K562 (cell line): ENCODE measurements at regions of chr11 and their contacts with region 1.

Region 1: GRCh38 chr11:62841361-62842184 is 2.2 kb upstream of the WDR74 start:
- DNase-seq: peak; percentile 81 to 96 (median 88)
- ATAC-seq: peak; percentile 89
- H3K4me3 ChIP-seq: peak overlapping the region; percentile 33
- H3K27ac ChIP-seq: peak overlapping the region; percentile 89
- H3K4me1 ChIP-seq: peaks cover 8 to 19% of the 10 kb centered on the region in 2 experiments; a peak in 3 of 5 replicates
- H3K27me3 ChIP-seq: no peaks in the 10 kb centered on the region
- CTCF ChIP-seq: 0 out of 6 replicates have a peak, but pooled peaks of 2 of the 3 experiments have one; percentile 3 to 10
- EP300 ChIP-seq: peak; percentile 82
- POLR2A ChIP-seq: peak; percentile 100
- RAD21 ChIP-seq: peak; percentile 33 to 74; a peak in 3 of 4 replicates

Region 2: DNA sequence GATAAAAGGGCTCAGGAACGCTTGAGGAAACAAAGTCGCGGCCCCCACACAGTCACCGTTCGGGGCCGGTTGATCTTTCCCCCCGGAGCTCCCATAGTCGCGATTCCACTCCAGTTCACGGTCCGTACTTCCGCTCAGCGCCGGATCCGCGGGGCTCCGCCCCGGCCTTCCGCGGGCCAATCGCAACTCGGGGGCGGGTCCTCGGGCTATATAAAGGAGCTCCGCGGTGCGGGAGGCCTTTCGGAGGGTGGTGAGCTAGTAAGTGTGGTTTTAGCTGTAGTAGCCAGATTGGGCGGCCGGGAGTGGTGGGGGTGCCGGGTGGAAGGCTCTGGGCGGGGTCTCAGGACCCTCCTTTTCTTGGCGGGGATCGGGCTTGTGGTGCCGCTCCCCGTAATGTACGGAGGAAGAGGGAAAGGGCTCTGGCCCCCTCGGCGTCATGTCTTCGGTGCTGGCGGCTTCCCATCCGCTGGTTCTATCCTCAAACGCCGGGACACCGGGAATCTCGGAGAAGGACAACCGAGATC is 176.4 kb before region 1 on chr11 and contains the starts of genes C11orf98 and CSKMT:
- CTCF ChIA-PET with region 1: no interaction called
- POLR2A ChIA-PET with region 1: interaction called, 18 read pairs
- in situ Hi-C with region 1: no loop called
- intact Hi-C with region 1: loop called (anchors 5 kb)
- DNase-seq: peak; percentile 91 to 97 (median 94)
- ATAC-seq: peak; percentile 87
- H3K4me3 ChIP-seq: peak within 1 kb of the TSS; percentile 73
- H3K27ac ChIP-seq: peak within 1 kb of the TSS; percentile 80
- H3K4me1 ChIP-seq: peaks cover 19 to 41% of the 10 kb centered on the region in 2 experiments; a peak in 4 of 5 replicates
- H3K27me3 ChIP-seq: no peaks in the 10 kb centered on the region
- CTCF ChIP-seq: no peak
- EP300 ChIP-seq: no peak
- POLR2A ChIP-seq: peak; percentile 100
- RAD21 ChIP-seq: peak in 1 of 2 experiments; percentile 8; a peak in 1 of 4 replicates
- polyA plus RNA-seq, gene C11orf98: 164 to 246 TPM
- polyA plus RNA-seq, gene CSKMT: 26.4 to 31.8 TPM

Region 3: GRCh38 chr11:62753736-62754603 is 87.6 kb before region 1 on chr11 and contains the start of gene ZBTB3:
- CTCF ChIA-PET with region 1: no interaction called
- POLR2A ChIA-PET with region 1: interaction called, 21 read pairs
- in situ Hi-C with region 1: no loop called
- intact Hi-C with region 1: no loop called
- DNase-seq: peak; percentile 95 to 99 (median 96)
- ATAC-seq: peak; percentile 98
- H3K4me3 ChIP-seq: peak within 1 kb of the TSS; percentile 63
- H3K27ac ChIP-seq: peak within 1 kb of the TSS; percentile 86
- H3K4me1 ChIP-seq: peaks cover 14 to 28% of the 10 kb centered on the region in 2 experiments; a peak in 4 of 5 replicates
- H3K27me3 ChIP-seq: no peaks in the 10 kb centered on the region
- CTCF ChIP-seq: peak in 1 of 3 experiments; percentile 1; a peak in 1 of 6 replicates
- EP300 ChIP-seq: no peak
- POLR2A ChIP-seq: peak; percentile 98
- RAD21 ChIP-seq: no peak
- polyA plus RNA-seq, gene ZBTB3: 1.9 to 3.0 TPM

Region 4: DNA sequence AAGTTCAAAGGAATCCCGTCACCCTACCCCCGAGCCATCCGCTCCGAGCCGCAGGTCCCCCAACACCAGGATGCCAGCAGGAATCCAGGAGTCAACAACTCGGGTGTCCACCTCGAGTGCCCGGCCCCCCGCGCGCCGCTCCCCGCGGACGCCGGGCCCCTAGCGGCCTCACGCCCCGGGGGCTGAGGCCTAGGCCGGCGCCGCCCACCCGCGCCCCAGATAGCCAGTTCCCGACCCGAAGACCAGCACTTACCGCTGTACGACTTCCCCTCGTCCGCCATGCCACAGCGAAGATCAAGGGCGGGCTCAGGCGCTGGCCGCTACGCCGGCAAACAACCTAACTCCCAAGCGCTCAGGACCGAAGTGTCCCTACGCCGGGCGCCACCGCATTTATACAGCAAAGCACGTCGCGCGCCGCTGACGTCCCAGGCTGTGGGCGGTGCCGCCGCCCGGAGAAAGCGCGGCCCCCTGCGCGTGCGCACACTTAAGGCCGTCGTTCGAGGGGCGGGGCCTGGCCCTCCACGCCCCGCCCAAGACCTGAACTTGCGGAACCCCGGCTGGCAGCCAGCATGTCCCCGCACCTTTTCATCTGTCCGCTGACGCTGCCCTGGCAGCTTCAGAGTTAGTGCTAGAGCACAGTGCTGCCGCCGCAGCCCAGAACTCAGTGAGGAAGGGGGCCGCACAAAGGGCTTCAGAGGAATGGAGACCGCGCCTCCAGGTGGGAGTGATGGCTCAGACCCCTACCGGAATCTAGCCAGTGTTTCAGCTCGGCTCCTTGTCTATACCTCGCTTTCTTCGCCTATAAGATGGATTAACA is 36.3 kb before region 1 on chr11 and contains the start of gene NXF1:
- CTCF ChIA-PET with region 1: no interaction called
- POLR2A ChIA-PET with region 1: interaction called, 35 read pairs
- in situ Hi-C with region 1: no loop called
- intact Hi-C with region 1: loop called (anchors 2 kb)
- DNase-seq: peak; percentile 97 to 98 (median 98)
- ATAC-seq: peak; percentile 91
- H3K4me3 ChIP-seq: peak within 1 kb of the TSS; percentile 94
- H3K27ac ChIP-seq: peak within 1 kb of the TSS; percentile 74
- H3K4me1 ChIP-seq: peaks cover 11 to 19% of the 10 kb centered on the region in 2 experiments; a peak in 4 of 5 replicates
- H3K27me3 ChIP-seq: no peaks in the 10 kb centered on the region
- CTCF ChIP-seq: peak in 2 of 3 experiments; percentile 7 to 12; a peak in 2 of 6 replicates
- EP300 ChIP-seq: no peak; the same call in 1 of the 2 replicates
- POLR2A ChIP-seq: peak; percentile 100
- RAD21 ChIP-seq: 0 out of 4 replicates have a peak, but pooled peaks of 1 of the 2 experiments have one; percentile 4
- polyA plus RNA-seq, gene NXF1: 26.8 to 68.8 TPM

Region 5: DNA sequence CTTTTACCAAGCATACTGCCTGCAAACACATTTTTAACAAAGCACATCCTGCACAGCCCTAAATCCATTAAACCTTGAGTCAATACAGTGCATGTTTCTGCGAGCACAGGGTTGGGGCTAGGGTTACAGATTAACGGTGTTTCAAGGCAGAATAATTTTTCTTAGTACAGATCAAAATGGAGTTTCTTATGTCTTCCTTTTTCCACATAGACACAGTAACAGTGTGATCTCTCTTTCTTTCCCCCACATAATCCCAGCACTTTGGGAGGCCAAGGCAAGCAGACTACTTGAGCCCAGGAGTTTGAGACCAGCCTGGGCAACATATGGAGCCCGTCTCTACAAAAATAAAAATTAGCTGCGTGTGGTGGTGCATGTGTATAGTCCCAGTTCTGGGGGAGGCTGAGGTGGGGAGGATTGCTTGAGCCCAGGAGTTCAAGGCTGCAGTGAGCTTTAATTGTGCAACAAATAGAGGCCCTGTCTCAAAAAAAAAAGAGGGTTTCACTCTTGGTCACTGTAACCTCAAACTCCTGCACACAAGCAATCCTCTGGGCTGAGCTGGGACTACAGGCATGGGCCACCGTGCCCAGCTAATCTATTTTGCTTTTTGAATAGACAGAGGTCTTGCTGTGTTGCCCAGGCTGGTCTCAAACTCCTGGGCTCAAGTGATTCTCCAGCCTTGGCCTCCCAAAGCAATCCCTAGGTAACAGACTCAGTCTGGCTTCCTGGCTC is 19.4 kb after region 1 on chr11:
- CTCF ChIA-PET with region 1: no interaction called
- POLR2A ChIA-PET with region 1: interaction called, 403 read pairs
- in situ Hi-C with region 1: no loop called
- intact Hi-C with region 1: loop called (anchors 1 kb)
- DNase-seq: no peak
- ATAC-seq: no peak
- H3K4me3 ChIP-seq: peak overlapping the region; percentile 30; the same call in 1 of the 2 replicates
- H3K27ac ChIP-seq: peak overlapping the region; percentile 63; the same call in 2 of the 3 replicates
- H3K4me1 ChIP-seq: peaks cover 22 to 28% of the 10 kb centered on the region in 2 experiments; a peak in 4 of 5 replicates
- H3K27me3 ChIP-seq: no peaks in the 10 kb centered on the region
- CTCF ChIP-seq: no peak
- EP300 ChIP-seq: no peak
- POLR2A ChIP-seq: no peak
- RAD21 ChIP-seq: peak in 1 of 2 experiments; percentile 7; a peak in 1 of 4 replicates